ENCODE measurements at regions of chr2 and their contacts with region 1.

Region 1: GRCh38 chr2:197453161-197453914 is at the start of gene COQ10B:
- DNase-seq: peak; percentile 100
- H3K4me3 ChIP-seq: peak within 1 kb of the TSS; percentile 76 to 90
- H3K27ac ChIP-seq: peak within 1 kb of the TSS; percentile 99
- H3K4me1 ChIP-seq: peaks cover 26% of the 10 kb centered on the region
- H3K27me3 ChIP-seq: no peaks in the 10 kb centered on the region
- CTCF ChIP-seq: no peak
- POLR2A ChIP-seq: peak; percentile 45 to 92
- total RNA-seq, gene COQ10B: 28.5 TPM

Region 2: DNA sequence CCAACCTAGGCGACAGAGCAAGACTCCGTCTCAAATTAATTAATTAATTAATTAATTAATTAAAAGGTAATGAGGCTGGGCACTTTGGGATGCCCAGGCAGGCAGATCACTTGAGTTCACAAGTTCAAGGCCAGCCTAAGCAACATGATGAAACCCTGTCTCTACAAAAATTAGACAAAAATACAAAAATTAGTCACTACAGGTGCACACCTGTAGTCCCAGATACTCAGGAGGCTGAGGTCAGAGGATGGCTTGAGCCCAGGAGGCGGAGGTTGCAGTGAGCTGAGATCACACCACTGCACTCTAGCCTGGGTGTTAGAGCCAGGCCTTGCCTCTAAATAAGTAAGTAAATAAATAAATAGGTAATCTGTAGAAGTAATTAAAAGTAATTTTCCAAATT is 25.4 kb before region 1 on chr2:
- intact Hi-C with region 1: loop called (anchors 2 kb)
- DNase-seq: no peak
- H3K4me3 ChIP-seq: no peak overlapping the region
- H3K27ac ChIP-seq: no peak overlapping the region
- H3K4me1 ChIP-seq: peaks cover 91% of the 10 kb centered on the region
- H3K27me3 ChIP-seq: no peaks in the 10 kb centered on the region
- CTCF ChIP-seq: no peak
- POLR2A ChIP-seq: no peak

Region 3: DNA sequence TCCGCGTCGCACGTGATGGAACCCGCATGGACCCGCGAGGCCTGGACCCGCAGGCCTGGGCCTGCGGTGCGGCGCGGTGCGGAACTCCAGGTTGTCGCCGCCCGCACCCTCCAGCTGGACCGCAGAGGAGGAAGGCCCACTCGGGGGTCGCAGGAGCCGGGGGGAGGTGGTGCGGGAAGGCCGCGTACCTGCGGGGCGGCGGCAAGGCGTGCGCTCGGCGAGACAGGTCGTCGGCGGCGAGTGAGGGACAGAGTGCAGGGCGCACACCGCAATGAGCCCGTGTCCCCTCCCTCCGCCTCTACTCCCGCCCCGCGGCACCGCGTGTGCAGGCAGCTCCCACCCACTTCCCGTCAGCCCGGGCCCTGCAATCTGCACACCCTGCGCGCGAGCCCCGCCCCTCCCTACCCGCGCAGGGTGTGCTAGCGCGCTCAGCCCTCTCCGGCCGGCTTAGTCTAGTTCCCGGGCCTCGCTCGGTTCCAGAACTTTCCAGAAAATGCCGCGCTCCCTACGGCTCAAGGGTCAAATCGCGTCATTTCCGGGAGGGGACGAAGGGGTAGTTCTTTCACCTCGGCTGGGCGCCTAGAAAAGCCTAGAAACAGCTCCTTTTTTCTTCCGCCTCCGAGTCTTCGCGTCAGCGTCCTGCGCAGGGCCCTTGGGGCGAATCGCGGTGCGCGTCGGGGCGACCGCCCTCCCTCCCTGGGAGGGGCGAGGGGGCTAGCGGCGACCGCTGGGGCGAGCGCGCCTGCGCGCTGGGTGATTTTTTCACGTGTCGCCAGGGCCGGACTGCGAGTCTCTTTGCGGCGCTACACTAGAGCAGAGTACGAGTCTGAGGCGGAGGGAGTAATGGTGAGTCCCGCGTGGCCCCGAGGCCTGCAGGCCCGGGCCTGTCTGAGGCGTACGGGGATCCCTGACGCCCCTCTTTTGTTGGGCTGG is 46.5 kb after region 1 on chr2 and contains the starts of genes HSPD1 and HSPE1:
- intact Hi-C with region 1: loop called (anchors 5 kb)
- DNase-seq: peak; percentile 99
- H3K4me3 ChIP-seq: peak within 1 kb of the TSS; percentile 93 to 94
- H3K27ac ChIP-seq: peak within 1 kb of the TSS; percentile 100
- H3K4me1 ChIP-seq: peaks cover 53% of the 10 kb centered on the region
- H3K27me3 ChIP-seq: no peaks in the 10 kb centered on the region
- CTCF ChIP-seq: peak in 2 of 3 experiments; percentile 12 to 36
- POLR2A ChIP-seq: peak; percentile 89 to 97
- total RNA-seq, gene HSPD1: 127 TPM
- total RNA-seq, gene HSPE1: 39.0 TPM

Measured in vagina (tissue), 2 donors.